ENCODE measurements at regions of chr3 and their contacts with region 1.

Region 1: DNA sequence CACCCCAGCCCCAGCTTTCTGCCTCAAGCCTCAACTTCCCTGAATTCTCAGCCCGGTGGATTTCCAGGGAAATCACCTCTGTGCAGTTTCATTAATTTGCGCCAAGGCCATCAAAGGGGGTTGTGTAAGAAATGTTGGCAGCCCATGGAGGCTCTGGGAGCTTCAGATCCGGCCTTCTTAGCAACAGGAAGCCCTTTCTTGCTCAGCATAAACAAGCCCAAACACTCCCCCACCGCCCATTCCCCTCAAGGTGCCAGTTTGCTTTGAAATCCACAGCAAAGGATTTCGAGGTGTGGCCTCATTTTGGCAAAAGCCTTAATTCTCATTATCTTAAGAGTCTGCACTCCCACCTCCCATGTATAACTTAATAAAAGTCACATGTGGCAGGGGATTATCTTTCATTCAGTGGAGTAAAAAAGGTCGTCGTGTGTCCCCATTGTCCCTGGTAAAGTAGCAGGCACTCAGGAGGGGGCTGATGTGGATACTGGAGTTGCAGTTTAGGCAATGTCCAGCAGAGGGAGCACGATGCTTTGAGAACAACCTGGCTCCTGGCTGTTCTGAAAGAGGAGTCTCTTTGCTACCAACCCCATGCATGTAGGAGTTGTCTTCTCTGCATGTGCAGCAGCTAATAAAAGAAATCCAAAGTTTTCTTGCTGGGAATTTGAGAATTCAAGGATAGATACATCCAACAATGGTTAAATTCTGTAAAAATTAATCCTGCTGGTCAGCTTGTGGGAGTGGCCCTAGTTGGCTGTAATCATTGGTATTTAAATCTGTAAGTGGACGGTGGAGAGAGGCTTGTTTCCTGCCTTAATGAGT is 39.5 kb downstream of the EBLN2 start:
- DNase-seq: peak; percentile 53 to 65 (median 61)
- H3K4me3 ChIP-seq: no peak overlapping the region
- H3K4me3 Mint-ChIP-seq: no peak overlapping the region
- H3K27ac ChIP-seq: no peak overlapping the region
- H3K27ac Mint-ChIP-seq: no peak overlapping the region
- H3K4me1 ChIP-seq: no peaks in the 10 kb centered on the region
- H3K4me1 Mint-ChIP-seq: peaks cover 0 to 7% (median 3%) of the 10 kb centered on the region in 4 donors
- H3K27me3 ChIP-seq: no peaks in the 10 kb centered on the region
- H3K27me3 Mint-ChIP-seq: peaks cover 1 to 6% of the 10 kb centered on the region in 2 donors

Region 2: GRCh38 chr3:73115806-73116205 is 14.9 kb after region 1 on chr3:
- CTCF ChIA-PET with region 1: interaction called, 11 read pairs
- POLR2A ChIA-PET with region 1: no interaction called
- intact Hi-C with region 1: no loop called
- DNase-seq: no peak
- H3K4me3 ChIP-seq: no peak overlapping the region
- H3K4me3 Mint-ChIP-seq: no peak overlapping the region
- H3K27ac ChIP-seq: no peak overlapping the region
- H3K27ac Mint-ChIP-seq: no peak overlapping the region
- H3K4me1 ChIP-seq: no peaks in the 10 kb centered on the region
- H3K4me1 Mint-ChIP-seq: no peaks in the 10 kb centered on the region
- H3K27me3 ChIP-seq: no peaks in the 10 kb centered on the region
- H3K27me3 Mint-ChIP-seq: peaks cover 2 to 18% of the 10 kb centered on the region in 2 donors

Region 3: DNA sequence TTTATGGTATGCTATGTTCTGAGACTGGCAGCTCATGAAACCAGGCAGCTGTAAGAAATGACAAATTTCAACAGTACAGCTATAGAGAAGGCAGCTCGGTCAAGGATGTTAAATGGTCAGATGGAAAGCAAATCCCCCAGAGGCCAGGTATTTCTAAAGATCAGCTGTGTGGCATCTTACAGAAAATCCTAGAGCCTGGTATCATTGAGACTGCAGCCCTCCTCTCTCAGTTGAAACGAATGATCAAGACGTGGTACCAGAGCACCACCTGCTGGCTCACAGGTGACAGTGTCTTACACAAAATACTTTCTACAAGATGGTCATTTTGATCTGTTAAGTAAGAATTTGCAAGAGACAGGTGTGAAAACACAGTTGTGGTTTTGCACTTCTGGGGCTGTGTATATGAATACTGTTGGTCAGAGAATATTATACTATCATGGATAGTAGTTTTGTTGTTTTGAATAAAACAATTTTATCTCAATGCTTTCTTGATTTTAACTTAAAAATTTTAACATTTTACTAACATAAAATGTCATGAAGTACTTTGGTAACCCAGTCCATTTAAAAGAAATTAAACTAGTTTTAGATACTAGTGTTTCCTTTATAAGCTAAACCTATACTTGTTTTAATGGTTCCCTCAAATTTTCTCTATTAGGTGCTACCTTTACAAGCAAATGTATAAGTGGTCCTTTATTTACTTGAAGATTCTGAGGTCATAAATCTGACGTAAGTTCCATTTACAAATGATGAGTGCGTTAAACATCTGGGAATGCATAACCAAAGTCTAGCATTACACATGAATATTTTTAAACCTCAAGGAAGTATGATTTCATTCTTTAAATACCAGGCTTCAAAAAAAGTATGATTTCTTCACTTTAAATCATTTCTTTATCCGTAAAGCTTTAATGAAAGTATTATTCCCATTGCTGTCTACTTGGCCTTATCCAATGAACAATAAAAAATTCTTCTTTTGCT is 401.9 kb after region 1 on chr3:
- CTCF ChIA-PET with region 1: interaction called, 32 read pairs
- POLR2A ChIA-PET with region 1: no interaction called
- intact Hi-C with region 1: no loop called
- DNase-seq: peak in 4 of 5 donors; percentile 17 to 34 (median 20)
- H3K4me3 ChIP-seq: no peak overlapping the region
- H3K4me3 Mint-ChIP-seq: no peak overlapping the region
- H3K27ac ChIP-seq: no peak overlapping the region
- H3K27ac Mint-ChIP-seq: no peak overlapping the region
- H3K4me1 ChIP-seq: no peaks in the 10 kb centered on the region
- H3K4me1 Mint-ChIP-seq: no peaks in the 10 kb centered on the region
- H3K27me3 ChIP-seq: no peaks in the 10 kb centered on the region
- H3K27me3 Mint-ChIP-seq: peaks cover 6% of the 10 kb centered on the region in 2 donors